ENCODE measurements at regions of chr7 and their contacts with region 1.

Region 1: DNA sequence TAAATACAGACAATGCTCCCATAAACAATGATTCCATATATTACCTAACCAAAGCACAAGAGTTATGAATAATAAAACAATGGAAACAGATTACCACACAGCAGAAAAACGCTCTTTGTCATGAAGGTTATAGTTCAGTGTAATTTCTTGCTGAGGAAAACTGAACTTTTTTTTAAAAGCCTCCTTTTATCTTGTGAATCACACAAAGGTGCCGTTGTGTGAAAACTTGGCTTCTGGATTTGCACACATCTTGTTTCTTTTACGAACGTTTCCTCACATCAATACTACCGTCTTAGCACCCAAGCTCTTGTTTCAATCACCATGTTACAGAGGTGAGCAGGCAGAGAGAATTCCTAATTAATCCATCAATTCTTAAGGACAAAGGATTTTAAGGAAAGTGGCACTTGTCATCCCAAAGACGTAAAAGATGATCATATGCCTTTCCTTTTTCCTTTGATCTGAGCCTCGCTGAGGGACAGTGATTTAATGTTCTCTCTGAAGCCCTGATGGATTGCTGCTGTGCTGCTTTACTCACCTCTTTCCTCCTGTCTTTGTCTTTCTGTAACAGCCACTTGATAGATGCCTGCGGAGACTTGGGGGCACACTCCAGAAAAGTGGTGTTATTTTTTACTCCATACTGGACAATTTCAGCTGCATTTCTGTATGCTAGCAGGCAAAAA is 110.1 kb downstream of the CD36 start:
- DNase-seq: no peak
- ATAC-seq: no peak
- H3K4me3 Mint-ChIP-seq: no peak overlapping the region
- H3K27ac Mint-ChIP-seq: no peak overlapping the region
- H3K4me1 Mint-ChIP-seq: no peaks in the 10 kb centered on the region
- H3K27me3 Mint-ChIP-seq: no peaks in the 10 kb centered on the region

Region 2: DNA sequence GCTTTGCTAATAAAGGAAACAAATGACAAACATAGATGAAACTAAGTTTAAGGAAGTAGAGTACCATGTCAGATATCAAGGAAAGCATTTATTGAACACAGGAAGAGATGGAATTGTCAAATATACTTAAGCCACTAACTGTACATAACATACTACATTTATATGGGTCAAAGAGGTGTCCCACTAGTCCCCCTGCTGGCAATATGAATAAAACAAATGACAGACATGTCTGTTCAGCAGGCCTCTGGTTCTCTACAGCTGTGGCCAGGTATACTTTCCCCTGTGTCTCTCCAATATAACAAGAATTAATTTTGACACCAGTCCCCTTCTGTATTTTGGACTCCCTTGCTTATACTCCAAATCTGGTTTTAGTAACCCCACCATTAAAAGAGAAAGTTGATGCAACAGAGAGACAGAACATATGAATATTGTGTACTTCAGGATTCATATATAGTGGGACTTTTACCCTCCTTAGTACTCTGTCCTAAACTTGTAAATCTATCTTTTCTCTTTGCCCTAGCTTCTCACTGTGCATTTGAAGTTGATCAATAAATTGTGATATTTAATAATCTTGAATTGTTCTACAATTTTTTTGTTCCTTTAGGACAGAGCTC is 67.1 kb before region 1 on chr7:
- CTCF ChIA-PET with region 1: no interaction called
- POLR2A ChIA-PET with region 1: no interaction called
- intact Hi-C with region 1: loop called in 1 of 2 experiments (anchors 2 kb)
- DNase-seq: no peak
- ATAC-seq: no peak
- H3K4me3 Mint-ChIP-seq: no peak overlapping the region
- H3K27ac Mint-ChIP-seq: no peak overlapping the region
- H3K4me1 Mint-ChIP-seq: no peaks in the 10 kb centered on the region
- H3K27me3 Mint-ChIP-seq: peaks cover 2% of the 10 kb centered on the region

Measured in activated CD4-positive, alpha-beta T cell treated with anti-CD3 and anti-CD28 coated beads for 36 hours (primary cell).